CD4-positive, alpha-beta memory T cell (primary cell): ENCODE measurements at regions of chr6 and their contacts with region 1.

Region 1: GRCh38 chr6:797479-798077 is 104.6 kb upstream of the EXOC2 start:
- DNase-seq: peak in 4 of 5 donors; percentile 18 to 24 (median 24)
- H3K4me3 ChIP-seq: no peak overlapping the region
- H3K4me3 Mint-ChIP-seq: no peak overlapping the region
- H3K27ac ChIP-seq: no peak overlapping the region
- H3K27ac Mint-ChIP-seq: no peak overlapping the region
- H3K4me1 ChIP-seq: no peaks in the 10 kb centered on the region
- H3K4me1 Mint-ChIP-seq: peaks cover 0 to 4% (median 0%) of the 10 kb centered on the region in 4 donors
- H3K27me3 ChIP-seq: peaks cover 4% of the 10 kb centered on the region
- H3K27me3 Mint-ChIP-seq: peaks cover 32 to 44% of the 10 kb centered on the region in 2 donors

Region 2: GRCh38 chr6:1381481-1382330 is 584.1 kb after region 1 on chr6:
- CTCF ChIA-PET with region 1: interaction called, 5 read pairs
- POLR2A ChIA-PET with region 1: no interaction called
- intact Hi-C with region 1: loop called (anchors 1 kb)
- DNase-seq: peak in 4 of 5 donors; percentile 36 to 57 (median 48)
- H3K4me3 ChIP-seq: no peak overlapping the region
- H3K4me3 Mint-ChIP-seq: peak overlapping the region in 6 of 8 donors; percentile 21 to 74 (median 55)
- H3K27ac ChIP-seq: no peak overlapping the region
- H3K27ac Mint-ChIP-seq: no peak overlapping the region
- H3K4me1 ChIP-seq: peaks cover 38% of the 10 kb centered on the region
- H3K4me1 Mint-ChIP-seq: peaks cover 15 to 41% (median 33%) of the 10 kb centered on the region in 4 donors
- H3K27me3 ChIP-seq: peaks cover 41% of the 10 kb centered on the region
- H3K27me3 Mint-ChIP-seq: peaks cover 42 to 51% of the 10 kb centered on the region in 2 donors

Region 3: DNA sequence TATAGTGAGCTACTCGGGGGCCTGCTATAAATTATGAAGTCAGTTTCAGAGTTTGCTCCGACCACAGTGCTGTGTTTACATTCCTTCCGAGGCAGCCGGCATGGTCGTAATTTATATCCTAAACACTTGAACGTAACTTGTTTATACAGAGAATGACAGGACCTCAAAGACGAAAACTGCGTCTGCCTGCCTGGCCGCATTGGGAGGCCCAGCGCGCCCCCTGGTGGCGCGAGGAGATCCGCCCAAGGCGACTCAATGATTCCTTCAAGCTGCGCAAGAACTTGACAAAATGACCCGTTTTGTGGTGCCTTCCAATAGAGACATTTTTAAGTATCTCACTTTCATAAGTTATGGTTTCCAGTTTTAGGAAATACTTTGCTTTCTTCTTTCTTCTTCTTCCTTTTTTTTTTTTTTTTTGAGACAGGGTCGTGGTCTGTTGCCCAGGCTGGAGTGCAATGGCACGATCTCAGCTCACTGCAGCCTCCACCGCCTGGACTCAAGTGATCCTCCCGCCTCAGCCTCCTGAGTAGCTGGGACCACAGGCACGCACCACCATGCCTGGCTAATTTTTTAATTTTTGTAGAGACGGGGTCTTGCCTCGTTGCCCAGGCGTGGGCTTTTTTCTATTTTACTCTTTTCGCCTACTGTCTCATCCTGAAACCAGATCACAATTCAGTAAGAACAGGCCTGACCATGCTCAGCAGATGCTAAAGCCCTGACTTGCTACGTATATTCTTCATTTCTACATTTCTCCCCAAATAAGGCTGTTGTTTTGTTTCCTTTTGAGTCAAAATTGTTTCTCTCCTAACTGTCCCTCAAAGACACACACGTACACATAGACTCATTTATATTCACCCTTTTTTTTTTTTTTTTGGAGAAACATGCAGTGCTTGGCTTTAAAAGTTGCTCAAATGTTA is 599.6 kb after region 1 on chr6:
- CTCF ChIA-PET with region 1: interaction called, 4 read pairs
- POLR2A ChIA-PET with region 1: no interaction called
- intact Hi-C with region 1: loop called (anchors 1 kb)
- DNase-seq: peak; percentile 54 to 63 (median 60)
- H3K4me3 ChIP-seq: no peak overlapping the region
- H3K4me3 Mint-ChIP-seq: peak overlapping the region in 5 of 8 donors; percentile 0 to 62 (median 31)
- H3K27ac ChIP-seq: no peak overlapping the region
- H3K27ac Mint-ChIP-seq: peak overlapping the region in 2 of 7 donors; percentile 30 to 37
- H3K4me1 ChIP-seq: no peaks in the 10 kb centered on the region
- H3K4me1 Mint-ChIP-seq: peaks cover 5 to 18% (median 10%) of the 10 kb centered on the region in 4 donors
- H3K27me3 ChIP-seq: peaks cover 24% of the 10 kb centered on the region
- H3K27me3 Mint-ChIP-seq: peaks cover 42 to 49% of the 10 kb centered on the region in 2 donors

Region 4: GRCh38 chr6:1436334-1437306 is 639.0 kb after region 1 on chr6:
- CTCF ChIA-PET with region 1: interaction called, 8 read pairs
- POLR2A ChIA-PET with region 1: no interaction called
- intact Hi-C with region 1: loop called (anchors 2 kb)
- DNase-seq: peak; percentile 50 to 56 (median 52)
- H3K4me3 ChIP-seq: no peak overlapping the region
- H3K4me3 Mint-ChIP-seq: no peak overlapping the region
- H3K27ac ChIP-seq: no peak overlapping the region
- H3K27ac Mint-ChIP-seq: no peak overlapping the region
- H3K4me1 ChIP-seq: no peaks in the 10 kb centered on the region
- H3K4me1 Mint-ChIP-seq: peaks cover 0 to 3% (median under 1%) of the 10 kb centered on the region in 4 donors
- H3K27me3 ChIP-seq: no peaks in the 10 kb centered on the region
- H3K27me3 Mint-ChIP-seq: peaks cover 31 to 35% of the 10 kb centered on the region in 2 donors